ENCODE measurements at regions of chr19 and their contacts with region 1.

Region 1: GRCh38 chr19:45439569-45440254 is 16.0 kb upstream of the ERCC1 start:
- DNase-seq: peak; percentile 94
- ATAC-seq: peak; percentile 40
- H3K4me3 Mint-ChIP-seq: peak overlapping the region; percentile 72
- H3K27ac Mint-ChIP-seq: peak overlapping the region; percentile 75
- H3K4me1 Mint-ChIP-seq: peaks cover 37% of the 10 kb centered on the region
- H3K27me3 Mint-ChIP-seq: no peaks in the 10 kb centered on the region
- CTCF ChIP-seq: peak; percentile 98

Region 2: GRCh38 chr19:45423589-45424190 is 16.0 kb before region 1 on chr19 and contains the start of gene ERCC1:
- CTCF ChIA-PET with region 1: interaction called, 7 read pairs
- POLR2A ChIA-PET with region 1: interaction called, 7 read pairs
- intact Hi-C with region 1: loop called (anchors 1 kb)
- DNase-seq: peak; percentile 79
- ATAC-seq: peak; percentile 74
- H3K4me3 Mint-ChIP-seq: peak within 1 kb of the TSS; percentile 96
- H3K27ac Mint-ChIP-seq: peak within 1 kb of the TSS; percentile 89
- H3K4me1 Mint-ChIP-seq: peaks cover 65% of the 10 kb centered on the region
- H3K27me3 Mint-ChIP-seq: no peaks in the 10 kb centered on the region
- CTCF ChIP-seq: no peak
- total RNA-seq, gene ERCC1: 69.2 and 71.6 TPM in 2 replicates

Region 3: GRCh38 chr19:45455707-45456499 is 16.2 kb after region 1 on chr19:
- CTCF ChIA-PET with region 1: interaction called, 12 read pairs
- POLR2A ChIA-PET with region 1: interaction called, 3 read pairs
- intact Hi-C with region 1: loop called (anchors 1 kb)
- DNase-seq: peak; percentile 69
- ATAC-seq: peak; percentile 59
- H3K4me3 Mint-ChIP-seq: peak overlapping the region; percentile 67
- H3K27ac Mint-ChIP-seq: peak overlapping the region; percentile 80
- H3K4me1 Mint-ChIP-seq: peaks cover 44% of the 10 kb centered on the region
- H3K27me3 Mint-ChIP-seq: no peaks in the 10 kb centered on the region
- CTCF ChIP-seq: no peak

Region 4: GRCh38 chr19:45478454-45479238 is 38.9 kb after region 1 on chr19:
- CTCF ChIA-PET with region 1: interaction called, 336 read pairs
- POLR2A ChIA-PET with region 1: interaction called, 92 read pairs
- intact Hi-C with region 1: loop called (anchors 1 kb)
- DNase-seq: peak; percentile 79
- ATAC-seq: peak; percentile 81
- H3K4me3 Mint-ChIP-seq: peak overlapping the region; percentile 89
- H3K27ac Mint-ChIP-seq: peak overlapping the region; percentile 97
- H3K4me1 Mint-ChIP-seq: peaks cover 21% of the 10 kb centered on the region
- H3K27me3 Mint-ChIP-seq: peaks cover 14% of the 10 kb centered on the region
- CTCF ChIP-seq: peak; percentile 72

Region 5: GRCh38 chr19:45558399-45558878 is 118.7 kb after region 1 on chr19:
- CTCF ChIA-PET with region 1: interaction called, 11 read pairs
- POLR2A ChIA-PET with region 1: no interaction called
- intact Hi-C with region 1: no loop called
- DNase-seq: peak; percentile 26
- ATAC-seq: peak; percentile 99
- H3K4me3 Mint-ChIP-seq: no peak overlapping the region
- H3K27ac Mint-ChIP-seq: no peak overlapping the region
- H3K4me1 Mint-ChIP-seq: peaks cover 25% of the 10 kb centered on the region
- H3K27me3 Mint-ChIP-seq: no peaks in the 10 kb centered on the region
- CTCF ChIP-seq: no peak

Measured in activated B cell treated with CpG ODN at 0.5 μM for 24 hours (primary cell).